Posterior vena cava (tissue), 2 donors: ENCODE measurements at regions of chr15 and their contacts with region 1.

Region 1: GRCh38 chr15:25171856-25172687 is 217.3 kb downstream of the SNRPN start:
- DNase-seq: peak; percentile 56

Region 2: DNA sequence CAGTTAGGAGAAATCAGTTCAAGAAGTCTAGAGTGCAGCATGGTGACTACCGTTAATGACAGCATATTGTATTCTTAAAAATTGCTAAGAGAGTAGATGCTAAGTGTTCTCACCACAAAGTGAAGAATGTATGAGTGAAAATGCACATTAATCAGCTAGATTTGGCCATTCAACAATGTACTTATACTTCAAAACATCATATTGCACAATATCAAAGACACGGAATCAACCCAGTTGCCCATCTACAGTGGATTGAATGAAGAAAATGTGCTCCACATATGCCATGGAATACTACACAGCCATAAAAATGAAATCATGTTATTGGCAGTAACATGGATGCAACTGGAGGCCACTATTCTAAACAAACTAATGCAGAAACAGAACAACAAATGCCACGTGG is 1365.1 kb before region 1 on chr15:
- intact Hi-C with region 1: loop called in 1 of 2 experiments (anchors 5 kb)
- DNase-seq: no peak

Region 3: DNA sequence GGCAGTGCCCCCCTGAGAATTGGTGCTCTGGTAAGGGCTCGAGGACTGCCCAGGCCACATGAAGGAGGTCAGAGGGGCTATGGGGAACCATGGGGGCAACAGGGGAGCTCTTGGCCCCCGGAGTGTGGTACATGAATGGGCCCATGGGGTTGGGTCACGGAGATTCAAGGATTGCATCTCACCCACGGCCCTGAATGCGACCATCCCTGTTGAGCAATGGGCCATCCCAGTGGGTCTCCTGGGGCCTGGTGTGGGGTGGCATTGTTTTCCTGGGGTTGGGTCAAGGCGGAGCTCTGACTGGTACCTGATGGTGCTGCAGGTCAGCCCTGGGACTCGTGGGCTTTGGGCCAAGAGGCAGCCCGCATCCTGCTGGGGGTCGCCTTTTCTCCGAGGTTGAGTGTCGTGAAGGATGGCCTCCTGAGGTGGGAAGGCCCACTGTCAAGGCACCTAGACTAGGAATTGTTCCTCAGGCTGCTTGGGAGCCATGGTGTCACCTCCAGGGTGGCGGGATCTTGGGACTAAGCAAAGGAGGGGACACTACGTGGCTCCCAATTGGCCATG is 68.5 kb after region 1 on chr15:
- intact Hi-C with region 1: no loop called
- DNase-seq: peak; percentile 44